ENCODE measurements at regions of chr1 and their contacts with region 1.

Region 1: DNA sequence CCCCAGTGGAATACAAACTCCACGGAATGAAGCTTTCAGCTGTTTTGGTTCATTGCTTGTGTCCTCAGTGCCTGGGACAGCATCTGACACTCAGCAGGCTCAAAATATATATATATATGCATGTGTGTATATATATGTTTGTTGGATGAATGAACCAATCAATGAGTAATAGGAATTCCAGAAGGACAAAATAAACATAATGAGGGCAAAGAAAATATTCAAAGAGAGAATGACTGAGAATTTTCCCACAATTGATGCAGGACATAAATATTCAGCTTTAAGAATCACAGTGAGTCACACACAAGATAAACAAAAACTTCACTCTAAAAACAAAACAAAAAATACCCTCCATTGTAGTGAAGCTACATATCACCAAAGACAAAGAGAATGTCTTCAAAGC is 64.0 kb downstream of the CHD5 start:
- DNase-seq: peak; percentile 43
- ATAC-seq: peak; percentile 76
- H3K4me3 ChIP-seq: no peak overlapping the region
- H3K27ac ChIP-seq: no peak overlapping the region
- H3K4me1 ChIP-seq: peaks cover 4% of the 10 kb centered on the region
- H3K27me3 ChIP-seq: peaks cover 11% of the 10 kb centered on the region; the same call in 1 of the 2 replicates
- CTCF ChIP-seq: no peak
- POLR2A ChIP-seq: no peak
- RAD21 ChIP-seq: no peak

Region 2: GRCh38 chr1:6083801-6084446 is 32.2 kb before region 1 on chr1:
- CTCF ChIA-PET with region 1: no interaction called
- POLR2A ChIA-PET with region 1: no interaction called
- dilution Hi-C with region 1: no loop called
- in situ Hi-C with region 1: no loop called
- intact Hi-C with region 1: loop called (anchors 2 kb)
- DNase-seq: peak; percentile 20
- ATAC-seq: peak; percentile 80
- H3K4me3 ChIP-seq: no peak overlapping the region
- H3K27ac ChIP-seq: no peak overlapping the region
- H3K4me1 ChIP-seq: no peaks in the 10 kb centered on the region
- H3K27me3 ChIP-seq: peaks cover 29% of the 10 kb centered on the region
- CTCF ChIP-seq: no peak
- POLR2A ChIP-seq: no peak
- RAD21 ChIP-seq: no peak

Region 3: DNA sequence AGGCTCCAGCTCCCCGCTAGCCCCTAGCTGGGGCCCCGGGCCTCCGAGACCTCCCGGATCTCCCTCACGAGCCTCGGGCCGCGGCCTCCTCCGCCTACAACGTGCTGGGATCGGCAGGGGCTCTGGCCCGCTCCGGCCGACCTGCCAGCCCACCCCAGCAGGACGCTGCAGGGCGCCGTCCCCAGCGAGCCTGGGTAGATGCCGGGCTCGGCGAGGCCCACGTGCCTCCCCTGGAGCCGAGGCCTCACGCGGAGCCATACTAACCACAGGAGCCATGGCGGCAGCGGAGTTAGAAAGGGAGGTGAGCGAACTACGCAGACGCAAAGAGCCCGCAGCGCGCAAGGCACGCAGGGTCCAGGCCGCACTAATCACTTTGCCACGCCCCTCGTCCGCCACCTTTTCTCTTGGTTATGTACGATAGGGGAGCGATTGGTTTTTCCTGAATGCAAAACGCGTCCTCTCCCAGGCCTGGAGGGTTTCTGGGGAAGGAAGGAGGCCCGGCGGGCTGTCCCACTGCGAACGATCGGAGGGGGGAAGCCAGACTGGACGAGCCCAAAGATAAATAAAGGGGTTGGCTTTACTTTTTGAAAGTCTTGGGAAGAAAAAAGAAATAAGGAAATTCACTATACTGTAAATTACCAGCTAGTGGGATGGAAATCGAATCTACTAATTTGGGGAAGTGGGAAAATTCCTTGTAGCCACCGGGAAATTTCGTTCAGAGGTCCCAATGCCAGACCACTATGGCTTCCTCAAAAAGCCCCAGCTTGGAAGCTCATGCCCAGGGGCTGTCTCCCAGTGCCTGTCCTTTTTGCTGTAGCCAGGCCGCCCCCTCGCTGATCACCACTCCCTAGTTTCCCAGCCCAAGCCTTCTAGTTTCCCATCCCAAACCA is 83.4 kb after region 1 on chr1 and contains the start of gene RPL22:
- CTCF ChIA-PET with region 1: no interaction called
- POLR2A ChIA-PET with region 1: no interaction called
- dilution Hi-C with region 1: no loop called
- in situ Hi-C with region 1: no loop called
- intact Hi-C with region 1: loop called (anchors 5 kb)
- DNase-seq: peak; percentile 99
- ATAC-seq: peak; percentile 98
- H3K4me3 ChIP-seq: peak within 1 kb of the TSS; percentile 70
- H3K27ac ChIP-seq: peak within 1 kb of the TSS; percentile 75
- H3K4me1 ChIP-seq: peaks cover 4% of the 10 kb centered on the region; the same call in 1 of the 2 replicates
- H3K27me3 ChIP-seq: no peaks in the 10 kb centered on the region
- CTCF ChIP-seq: no peak
- POLR2A ChIP-seq: peak; percentile 86
- RAD21 ChIP-seq: no peak
- total RNA-seq, gene RPL22: 26.2 and 71.9 TPM in 2 replicates